ENCODE measurements at regions of chr3 and their contacts with region 1.

Region 1: GRCh38 chr3:143171141-143171970 is 51.8 kb downstream of the CHST2 start:
- DNase-seq: no peak
- H3K4me3 Mint-ChIP-seq: peak overlapping the region; percentile 63
- H3K27ac Mint-ChIP-seq: peak overlapping the region; percentile 99
- H3K4me1 Mint-ChIP-seq: peaks cover 65% of the 10 kb centered on the region
- H3K27me3 Mint-ChIP-seq: no peaks in the 10 kb centered on the region

Region 2: GRCh38 chr3:142735462-142735861 is 435.9 kb before region 1 on chr3:
- intact Hi-C with region 1: no loop called
- DNase-seq: no peak
- H3K4me3 Mint-ChIP-seq: no peak overlapping the region
- H3K27ac Mint-ChIP-seq: no peak overlapping the region
- H3K4me1 Mint-ChIP-seq: no peaks in the 10 kb centered on the region
- H3K27me3 Mint-ChIP-seq: peaks cover 9% of the 10 kb centered on the region

Region 3: GRCh38 chr3:142947799-142948575 is 223.4 kb before region 1 on chr3:
- intact Hi-C with region 1: no loop called
- DNase-seq: no peak
- H3K4me3 Mint-ChIP-seq: no peak overlapping the region
- H3K27ac Mint-ChIP-seq: no peak overlapping the region
- H3K4me1 Mint-ChIP-seq: peaks cover 12% of the 10 kb centered on the region
- H3K27me3 Mint-ChIP-seq: peaks cover 50% of the 10 kb centered on the region

Region 4: DNA sequence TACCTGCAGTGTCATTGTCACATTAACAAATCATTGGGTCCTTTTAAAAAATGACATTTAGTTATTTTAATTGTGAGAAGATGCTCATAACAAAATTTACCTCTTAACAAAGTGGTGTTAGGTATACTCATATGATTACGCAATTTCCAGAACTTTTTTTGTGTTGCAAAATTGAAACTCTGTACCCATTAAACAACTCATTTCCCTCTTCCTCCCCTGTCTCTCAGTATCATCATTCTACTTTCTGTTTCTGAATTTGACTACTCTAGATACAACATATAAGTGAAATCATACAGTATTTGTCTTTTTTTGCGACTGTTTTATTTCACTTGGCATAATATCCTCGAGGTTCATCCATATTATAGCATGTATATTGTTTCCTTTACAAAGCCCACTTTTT is 110.5 kb before region 1 on chr3:
- intact Hi-C with region 1: loop called (anchors 2 kb)
- DNase-seq: no peak
- H3K4me3 Mint-ChIP-seq: no peak overlapping the region
- H3K27ac Mint-ChIP-seq: no peak overlapping the region
- H3K4me1 Mint-ChIP-seq: peaks cover 19% of the 10 kb centered on the region
- H3K27me3 Mint-ChIP-seq: no peaks in the 10 kb centered on the region

Region 5: DNA sequence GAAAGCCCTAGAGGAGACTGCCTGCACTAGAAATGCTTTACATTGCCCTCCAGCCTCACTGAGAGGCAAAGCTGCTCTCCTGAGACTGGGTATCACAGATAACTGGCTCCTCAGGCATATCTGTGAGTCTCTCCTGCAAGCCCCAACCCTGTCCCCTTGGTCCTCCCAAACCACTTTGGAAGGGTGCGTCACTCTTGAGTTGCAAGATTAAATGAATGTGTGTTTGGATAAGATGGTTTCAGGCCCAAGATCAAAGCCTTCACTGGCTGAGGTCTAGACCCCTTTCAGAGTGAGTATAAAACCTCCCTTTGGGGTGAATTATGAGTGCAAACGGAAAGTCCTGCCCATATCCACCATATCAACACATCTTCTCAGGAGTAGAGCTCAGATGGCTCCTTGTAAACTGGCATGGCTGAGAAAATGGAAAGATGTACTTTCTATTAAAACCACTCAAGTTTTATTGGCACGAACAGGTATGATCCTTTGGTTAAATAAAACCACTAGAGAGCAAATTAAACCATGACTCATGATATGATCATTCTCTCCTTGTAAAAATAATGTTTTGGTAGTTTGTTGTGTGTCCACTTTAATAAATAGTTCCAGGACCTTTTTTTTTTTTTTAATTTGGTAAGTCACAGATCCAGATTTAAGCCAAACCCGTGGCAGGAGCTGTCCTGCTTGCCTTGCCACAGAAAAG is 112.2 kb after region 1 on chr3:
- intact Hi-C with region 1: loop called (anchors 5 kb)
- DNase-seq: no peak
- H3K4me3 Mint-ChIP-seq: no peak overlapping the region
- H3K27ac Mint-ChIP-seq: no peak overlapping the region
- H3K4me1 Mint-ChIP-seq: peaks cover 25% of the 10 kb centered on the region
- H3K27me3 Mint-ChIP-seq: no peaks in the 10 kb centered on the region

Region 6: DNA sequence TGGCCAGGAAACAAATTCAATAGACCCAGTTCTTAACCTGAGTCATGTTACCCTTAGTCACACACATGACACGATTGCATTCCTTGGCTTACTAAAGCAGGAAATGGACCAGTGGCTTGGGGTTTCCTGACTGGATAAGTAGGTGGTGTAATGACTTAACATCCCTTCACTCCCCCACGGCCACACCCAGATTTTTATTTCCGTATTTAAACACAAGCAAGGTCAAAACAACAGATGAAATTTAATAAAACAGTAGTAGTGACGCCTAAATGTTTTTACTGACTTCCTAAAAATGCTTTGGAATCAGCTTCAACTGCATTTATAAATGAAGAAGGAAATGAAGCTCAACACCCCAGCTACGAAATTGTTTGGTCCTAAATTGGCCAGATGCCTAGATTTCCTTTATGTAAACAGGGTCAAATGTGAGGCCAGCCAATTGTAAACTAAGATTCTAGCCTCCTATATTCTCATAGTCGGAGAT is 272.5 kb after region 1 on chr3:
- intact Hi-C with region 1: loop called (anchors 5 kb)
- DNase-seq: no peak
- H3K4me3 Mint-ChIP-seq: peak overlapping the region; percentile 11
- H3K27ac Mint-ChIP-seq: no peak overlapping the region
- H3K4me1 Mint-ChIP-seq: peaks cover 29% of the 10 kb centered on the region
- H3K27me3 Mint-ChIP-seq: peaks cover 5% of the 10 kb centered on the region